IMR-90 (cell line): ENCODE measurements at regions of chr1 and their contacts with region 1.

Region 1: DNA sequence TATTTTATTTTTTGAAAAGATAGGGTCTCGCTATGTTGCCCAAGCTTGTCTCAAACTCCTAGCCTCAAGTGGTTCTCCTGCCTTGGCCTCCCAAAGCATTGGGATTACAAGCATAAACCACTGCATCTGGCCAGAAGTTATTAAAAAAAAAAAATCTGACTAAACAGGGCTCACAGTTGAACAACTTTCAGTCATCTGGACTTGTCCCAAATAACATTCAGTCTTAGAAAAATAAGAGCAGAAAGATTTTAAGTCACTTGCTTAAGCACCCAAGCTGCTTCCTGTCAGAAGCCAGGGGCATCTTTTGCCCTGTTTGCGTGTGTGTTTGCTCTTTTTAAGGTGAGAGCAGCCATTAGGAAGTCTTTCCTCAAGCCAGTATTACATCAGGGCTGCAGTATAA is 286.8 kb downstream of the LMO4 start:
- DNase-seq: peak; percentile 16
- ATAC-seq: no peak
- H3K4me3 ChIP-seq: no peak overlapping the region
- H3K27ac ChIP-seq: no peak overlapping the region
- H3K4me1 ChIP-seq: no peaks in the 10 kb centered on the region
- H3K27me3 ChIP-seq: no peaks in the 10 kb centered on the region
- CTCF ChIP-seq: no peak
- POLR2A ChIP-seq: no peak
- RAD21 ChIP-seq: no peak

Region 2: GRCh38 chr1:87362078-87362833 is 253.2 kb before region 1 on chr1:
- CTCF ChIA-PET with region 1: no interaction called
- POLR2A ChIA-PET with region 1: interaction called, 25 read pairs
- dilution Hi-C with region 1: no loop called
- in situ Hi-C with region 1: no loop called
- intact Hi-C with region 1: no loop called
- DNase-seq: no peak
- ATAC-seq: no peak; the same call in 1 of the 2 replicates
- H3K4me3 ChIP-seq: no peak overlapping the region
- H3K27ac ChIP-seq: no peak overlapping the region
- H3K4me1 ChIP-seq: peaks cover 2% of the 10 kb centered on the region; the same call in 1 of the 2 replicates
- H3K27me3 ChIP-seq: no peaks in the 10 kb centered on the region
- CTCF ChIP-seq: no peak
- POLR2A ChIP-seq: no peak
- RAD21 ChIP-seq: no peak